ENCODE measurements at regions of chr10 and their contacts with region 1.

Region 1: DNA sequence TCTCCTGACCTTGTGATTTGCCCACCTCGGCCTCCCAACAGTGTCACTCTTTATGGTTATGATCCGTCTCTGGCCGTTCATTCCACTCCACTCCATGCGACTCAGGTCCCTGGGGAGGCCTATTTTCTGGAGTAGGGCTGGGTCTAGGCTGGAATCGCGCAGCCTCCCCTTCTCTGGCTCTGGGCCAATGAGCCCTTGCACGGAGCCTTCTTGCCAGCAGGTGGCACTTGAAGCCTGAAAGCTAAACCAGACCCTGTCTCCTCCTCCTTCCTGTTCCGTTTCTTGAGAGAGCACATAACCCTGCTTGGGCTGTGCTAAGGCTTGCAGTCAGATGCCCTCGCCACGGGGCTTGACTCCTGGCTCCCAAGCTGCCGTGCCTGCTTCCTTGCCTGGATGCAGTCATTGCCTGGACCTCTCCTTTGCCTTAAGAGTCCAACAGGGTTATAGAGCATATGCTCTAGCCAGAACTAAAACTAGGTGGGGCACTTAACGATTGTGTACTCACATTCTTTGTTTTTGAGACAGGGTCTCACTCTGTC is 9.6 kb upstream of the DNAJB12 start:
- DNase-seq: peak in 1 of 2 donors; percentile 93
- H3K4me3 ChIP-seq: peak overlapping the region in 1 of 2 donors; percentile 9
- H3K27ac ChIP-seq: peak overlapping the region; percentile 26
- H3K4me1 ChIP-seq: peaks cover 11% of the 10 kb centered on the region
- H3K27me3 ChIP-seq: no peaks in the 10 kb centered on the region
- CTCF ChIP-seq: peak; percentile 91 to 95 (median 95)
- POLR2A ChIP-seq: no peak

Region 2: DNA sequence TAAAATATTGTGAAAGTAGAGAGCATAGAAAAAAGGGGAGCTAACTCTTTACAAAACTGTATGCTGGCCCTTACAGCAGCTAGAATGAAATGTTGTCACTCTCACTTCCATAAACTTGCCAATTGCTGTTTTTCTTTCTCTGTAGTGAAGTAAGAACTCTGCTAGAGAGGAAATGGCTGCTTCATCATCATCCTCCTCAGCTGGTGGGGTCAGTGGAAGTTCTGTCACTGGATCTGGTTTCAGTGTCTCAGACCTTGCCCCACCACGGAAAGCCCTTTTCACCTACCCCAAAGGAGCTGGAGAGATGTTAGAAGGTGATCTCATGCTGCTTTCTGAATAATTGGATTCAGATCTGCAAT is 140.6 kb before region 1 on chr10:
- intact Hi-C with region 1: no loop called
- DNase-seq: no peak
- H3K4me3 ChIP-seq: no peak overlapping the region
- H3K27ac ChIP-seq: peak overlapping the region; percentile 71
- H3K4me1 ChIP-seq: peaks cover 19% of the 10 kb centered on the region
- H3K27me3 ChIP-seq: no peaks in the 10 kb centered on the region
- CTCF ChIP-seq: no peak
- POLR2A ChIP-seq: no peak

Region 3: GRCh38 chr10:73136627-73137026 is 772.3 kb after region 1 on chr10:
- intact Hi-C with region 1: loop called (anchors 5 kb)
- DNase-seq: no peak
- H3K4me3 ChIP-seq: no peak overlapping the region
- H3K27ac ChIP-seq: no peak overlapping the region
- H3K4me1 ChIP-seq: peaks cover 7% of the 10 kb centered on the region
- H3K27me3 ChIP-seq: no peaks in the 10 kb centered on the region
- CTCF ChIP-seq: no peak
- POLR2A ChIP-seq: no peak

Measured in vagina (tissue), 2 donors.